RWPE1 (cell line): ENCODE measurements at regions of chr12 and their contacts with region 1.

Region 1: GRCh38 chr12:120944645-120945231 is 33.6 kb upstream of the HNF1A start:
- DNase-seq: peak; percentile 58
- H3K27ac ChIP-seq: no peak overlapping the region
- CTCF ChIP-seq: peak; percentile 57

Region 2: GRCh38 chr12:120453977-120454376 is 490.8 kb before region 1 on chr12:
- CTCF ChIA-PET with region 1: interaction called, 11 read pairs
- POLR2A ChIA-PET with region 1: no interaction called
- DNase-seq: peak; percentile 44
- H3K27ac ChIP-seq: no peak overlapping the region
- CTCF ChIP-seq: peak; percentile 69